AG04450 (cell line): ENCODE measurements at regions of chr19 and their contacts with region 1.

Region 1: DNA sequence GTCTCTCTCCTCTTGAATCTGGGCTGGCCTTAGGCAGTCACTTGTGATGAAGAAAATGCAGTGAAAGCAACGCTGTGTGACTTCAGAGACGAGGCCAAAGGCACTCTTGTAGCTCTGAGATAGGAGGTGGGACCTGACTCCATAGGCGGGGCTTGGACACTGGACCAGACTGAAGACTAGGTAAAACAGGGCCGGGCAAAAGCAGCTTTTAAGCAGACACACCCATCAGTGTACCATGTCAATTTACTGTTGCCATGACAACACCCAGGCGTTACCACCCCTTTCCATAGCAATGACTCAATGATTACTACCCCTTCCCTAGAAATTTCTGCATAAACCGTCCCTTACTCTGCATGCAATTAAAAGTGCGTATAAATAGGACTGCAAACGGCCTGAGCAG is 6.6 kb upstream of the EID2 start:
- DNase-seq: no peak
- H3K4me3 ChIP-seq: no peak overlapping the region
- H3K27ac ChIP-seq: no peak overlapping the region
- H3K27me3 ChIP-seq: peaks cover 13% of the 10 kb centered on the region
- CTCF ChIP-seq: no peak

Region 2: GRCh38 chr19:39341719-39342604 is 204.6 kb before region 1 on chr19 and contains the start of gene SAMD4B:
- CTCF ChIA-PET with region 1: no interaction called
- POLR2A ChIA-PET with region 1: no interaction called
- DNase-seq: peak; percentile 97
- H3K4me3 ChIP-seq: peak within 1 kb of the TSS; percentile 80
- H3K27ac ChIP-seq: peak within 1 kb of the TSS; percentile 52
- H3K27me3 ChIP-seq: no peaks in the 10 kb centered on the region
- CTCF ChIP-seq: peak; percentile 65
- polyA plus RNA-seq, gene SAMD4B: 33.4 and 47.3 TPM in 2 replicates

Region 3: DNA sequence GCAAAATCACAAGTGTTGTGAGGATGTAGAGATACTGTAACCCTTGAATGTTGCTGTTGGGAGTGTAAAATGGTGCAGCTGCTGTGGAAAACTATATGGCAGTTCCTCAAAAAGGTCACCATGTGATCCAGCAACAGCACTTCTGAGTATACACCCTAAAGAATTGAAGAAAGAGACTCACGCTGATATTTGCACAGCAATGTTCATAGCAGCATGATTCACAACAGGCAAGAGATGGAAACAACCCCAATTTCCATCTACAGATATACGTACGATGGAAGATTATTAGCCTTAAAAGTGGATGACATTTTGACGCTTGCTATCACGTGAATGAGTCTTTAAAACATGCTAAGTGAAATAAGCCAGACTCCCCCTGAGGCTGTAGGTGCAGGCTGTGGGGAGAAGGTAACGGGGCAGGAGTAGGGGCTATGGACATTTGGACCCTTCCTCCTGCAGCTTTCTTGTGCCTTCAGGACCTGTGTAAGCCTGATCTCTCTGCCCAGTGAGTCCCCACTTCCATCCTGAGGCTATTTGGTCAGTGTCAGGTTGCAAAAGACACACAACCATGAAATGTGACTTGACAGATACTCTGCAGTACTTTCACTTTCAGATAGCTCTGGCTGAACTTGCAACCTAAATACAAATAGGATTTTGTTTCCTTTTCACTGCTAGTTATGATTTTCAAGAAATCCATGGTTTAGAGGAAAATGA is 11.0 kb after region 1 on chr19:
- CTCF ChIA-PET with region 1: interaction called, 12 read pairs
- POLR2A ChIA-PET with region 1: no interaction called
- DNase-seq: no peak
- H3K4me3 ChIP-seq: 0 out of 2 replicates have a peak overlapping the region, but pooled peaks have one; percentile 12
- H3K27ac ChIP-seq: no peak overlapping the region
- H3K27me3 ChIP-seq: peaks cover 5% of the 10 kb centered on the region
- CTCF ChIP-seq: no peak

Region 4: GRCh38 chr19:39671738-39672363 is 125.3 kb after region 1 on chr19:
- CTCF ChIA-PET with region 1: interaction called, 18 read pairs
- POLR2A ChIA-PET with region 1: no interaction called
- DNase-seq: no peak
- H3K4me3 ChIP-seq: no peak overlapping the region
- H3K27ac ChIP-seq: no peak overlapping the region
- H3K27me3 ChIP-seq: no peaks in the 10 kb centered on the region
- CTCF ChIP-seq: peak; percentile 58

Region 5: DNA sequence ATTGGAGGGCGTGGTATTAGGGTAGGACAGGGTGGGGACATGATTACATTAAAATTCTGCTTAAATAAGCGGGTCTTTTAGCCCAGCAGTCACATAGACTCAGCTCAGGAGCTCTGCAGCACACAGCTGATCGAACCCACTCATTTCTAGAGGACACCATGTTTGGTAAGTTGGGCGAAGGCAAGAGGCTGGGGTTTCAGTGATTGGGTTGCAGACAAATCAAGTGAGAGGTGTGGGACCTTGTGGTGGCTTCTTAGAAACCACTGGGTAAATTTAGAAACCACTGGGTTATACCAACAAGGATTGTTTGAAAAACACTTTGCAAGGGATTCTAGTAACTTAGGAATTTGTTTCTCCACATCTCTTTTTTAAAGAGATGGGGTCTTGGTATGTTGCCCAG is 232.2 kb after region 1 on chr19 and contains the start of gene LEUTX:
- CTCF ChIA-PET with region 1: no interaction called
- POLR2A ChIA-PET with region 1: no interaction called
- DNase-seq: no peak
- H3K4me3 ChIP-seq: no peak within 1 kb of the TSS
- H3K27ac ChIP-seq: no peak within 1 kb of the TSS
- H3K27me3 ChIP-seq: peaks cover 7% of the 10 kb centered on the region
- CTCF ChIP-seq: no peak
- polyA plus RNA-seq, gene LEUTX: not detected in 2 replicates